A673 (cell line): ENCODE measurements at regions of chr2 and their contacts with region 1.

Region 1: DNA sequence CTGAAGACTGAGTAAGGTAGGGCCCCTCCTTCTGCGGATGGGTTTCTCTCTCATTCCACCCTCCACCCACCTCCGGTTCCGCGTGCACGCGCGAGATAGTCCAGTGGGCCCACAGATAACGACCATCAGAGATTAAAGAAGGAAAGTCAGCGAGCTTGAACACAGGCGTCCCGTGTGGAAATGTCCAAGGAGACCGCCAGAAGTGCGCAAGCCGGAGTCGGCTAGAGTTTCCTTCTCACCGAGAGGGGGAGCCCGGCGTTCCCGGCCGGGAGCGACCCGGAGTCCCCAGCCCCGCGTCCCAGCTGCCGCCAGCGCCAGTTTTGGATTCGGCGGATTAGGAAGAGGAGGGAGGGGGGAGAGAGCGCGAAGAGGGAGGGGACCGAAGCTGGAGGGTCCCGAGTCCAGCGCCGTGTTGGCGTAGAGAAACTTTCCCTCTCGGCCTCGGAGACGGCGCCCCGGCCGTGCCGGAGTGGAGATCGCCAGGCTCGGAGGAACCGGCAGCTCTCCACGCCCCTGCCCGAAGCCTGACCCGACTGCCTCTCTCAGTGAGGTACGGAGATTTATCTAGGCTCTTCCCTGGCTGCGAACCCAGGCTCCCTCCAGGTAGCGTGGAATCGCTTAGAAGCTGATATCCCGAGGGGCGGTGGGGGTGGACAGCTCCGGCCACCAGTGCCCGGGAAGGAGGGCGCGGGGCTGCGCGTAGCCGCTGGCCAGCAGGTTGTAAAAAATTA is at the start of gene GULP1:
- DNase-seq: peak; percentile 90
- H3K4me3 ChIP-seq: peak within 1 kb of the TSS; percentile 66
- H3K27ac ChIP-seq: peak within 1 kb of the TSS; percentile 47
- H3K4me1 ChIP-seq: peaks cover 9% of the 10 kb centered on the region
- H3K27me3 ChIP-seq: no peaks in the 10 kb centered on the region
- CTCF ChIP-seq: peak; percentile 82
- total RNA-seq, gene GULP1: 7.2 and 9.5 TPM in 2 replicates

Region 2: DNA sequence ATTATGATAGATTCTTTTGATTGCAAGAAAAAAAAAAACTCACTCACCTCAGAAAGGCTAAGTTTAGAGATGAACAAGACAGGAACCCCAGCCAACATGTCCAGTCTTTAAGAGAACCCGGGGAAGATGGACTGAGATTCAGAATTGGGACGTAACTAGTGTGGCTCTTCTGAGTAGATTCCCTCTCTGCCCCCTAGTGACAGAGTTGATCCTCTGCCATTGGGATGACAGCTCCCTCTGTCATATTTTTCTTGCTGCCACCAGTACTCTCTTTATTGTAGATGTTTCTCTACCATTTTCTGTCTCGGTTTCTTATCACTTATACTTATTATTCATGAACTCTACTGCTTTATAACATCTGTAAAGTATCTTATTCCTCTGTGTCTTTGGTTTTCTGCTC is 77.6 kb after region 1 on chr2:
- CTCF ChIA-PET with region 1: interaction called, 6 read pairs
- POLR2A ChIA-PET with region 1: no interaction called
- intact Hi-C with region 1: loop called (anchors 2 kb)
- DNase-seq: peak; percentile 78
- H3K4me3 ChIP-seq: no peak overlapping the region
- H3K27ac ChIP-seq: no peak overlapping the region
- H3K4me1 ChIP-seq: peaks cover 3% of the 10 kb centered on the region
- H3K27me3 ChIP-seq: no peaks in the 10 kb centered on the region
- CTCF ChIP-seq: peak; percentile 87

Region 3: GRCh38 chr2:188414410-188414809 is 122.6 kb after region 1 on chr2:
- CTCF ChIA-PET with region 1: no interaction called
- POLR2A ChIA-PET with region 1: no interaction called
- intact Hi-C with region 1: no loop called
- DNase-seq: peak; percentile 54
- H3K4me3 ChIP-seq: no peak overlapping the region
- H3K27ac ChIP-seq: no peak overlapping the region
- H3K4me1 ChIP-seq: peaks cover 10% of the 10 kb centered on the region
- H3K27me3 ChIP-seq: no peaks in the 10 kb centered on the region
- CTCF ChIP-seq: no peak

Region 4: DNA sequence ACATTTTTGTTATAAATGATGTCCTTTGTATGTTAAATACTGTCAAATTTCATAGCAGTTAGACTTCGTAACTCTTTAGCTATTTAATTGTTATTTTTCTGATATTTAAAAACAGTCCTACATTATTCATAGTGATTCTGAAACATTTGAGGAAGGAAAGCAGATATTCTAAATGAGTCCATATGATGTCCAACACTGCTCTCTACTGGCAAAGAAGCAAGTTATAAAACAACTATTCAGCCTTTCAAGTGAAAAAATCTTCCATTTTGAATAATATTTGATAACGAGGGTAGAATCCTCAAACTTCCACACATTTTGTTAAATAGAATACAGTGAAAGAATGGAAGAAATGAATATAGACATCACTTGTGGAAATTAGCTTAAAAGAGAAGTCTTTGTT is 220.7 kb after region 1 on chr2:
- CTCF ChIA-PET with region 1: no interaction called
- POLR2A ChIA-PET with region 1: no interaction called
- intact Hi-C with region 1: loop called (anchors 5 kb)
- DNase-seq: peak; percentile 78
- H3K4me3 ChIP-seq: no peak overlapping the region
- H3K27ac ChIP-seq: no peak overlapping the region
- H3K4me1 ChIP-seq: peaks cover 8% of the 10 kb centered on the region
- H3K27me3 ChIP-seq: no peaks in the 10 kb centered on the region
- CTCF ChIP-seq: peak; percentile 71